ENCODE measurements at regions of chr19 and their contacts with region 1.

Region 1: DNA sequence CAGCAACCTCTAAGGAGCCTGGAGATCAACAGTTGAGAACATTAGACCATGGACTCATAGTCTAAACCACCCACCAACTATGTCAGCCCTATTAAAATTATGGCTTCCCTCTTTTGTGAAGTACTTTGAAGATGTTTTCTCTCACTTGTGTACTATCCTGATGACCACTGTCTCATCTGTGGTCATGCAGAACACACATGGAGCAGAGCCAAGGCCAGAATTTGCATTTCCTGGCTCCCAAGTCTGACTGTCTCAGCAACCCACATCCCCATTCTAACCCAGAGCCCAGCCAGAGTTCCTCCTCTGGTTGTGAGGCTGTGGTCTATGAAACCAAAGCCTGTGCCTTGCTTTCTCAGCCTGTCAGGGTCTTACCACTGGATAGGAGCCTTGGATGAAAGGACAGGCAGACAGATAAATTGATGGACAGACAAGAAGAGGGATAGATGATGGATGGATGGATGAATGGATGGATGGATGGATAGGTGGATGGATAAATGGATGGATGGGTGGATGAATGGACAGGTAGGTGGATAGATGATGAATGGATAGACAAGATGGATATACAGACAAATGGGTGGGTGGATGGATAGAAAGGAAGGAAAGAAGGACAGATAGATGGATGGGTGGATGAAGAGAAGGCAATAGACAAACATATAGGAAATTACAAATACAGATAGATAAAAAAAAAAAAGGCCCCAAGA is 35.4 kb downstream of the ZNF557 start:
- DNase-seq: no peak
- H3K4me3 ChIP-seq: no peak overlapping the region
- H3K4me1 ChIP-seq: peaks cover under 1% of the 10 kb centered on the region; the same call in 1 of the 2 replicates
- H3K27me3 ChIP-seq: no peaks in the 10 kb centered on the region

Region 2: DNA sequence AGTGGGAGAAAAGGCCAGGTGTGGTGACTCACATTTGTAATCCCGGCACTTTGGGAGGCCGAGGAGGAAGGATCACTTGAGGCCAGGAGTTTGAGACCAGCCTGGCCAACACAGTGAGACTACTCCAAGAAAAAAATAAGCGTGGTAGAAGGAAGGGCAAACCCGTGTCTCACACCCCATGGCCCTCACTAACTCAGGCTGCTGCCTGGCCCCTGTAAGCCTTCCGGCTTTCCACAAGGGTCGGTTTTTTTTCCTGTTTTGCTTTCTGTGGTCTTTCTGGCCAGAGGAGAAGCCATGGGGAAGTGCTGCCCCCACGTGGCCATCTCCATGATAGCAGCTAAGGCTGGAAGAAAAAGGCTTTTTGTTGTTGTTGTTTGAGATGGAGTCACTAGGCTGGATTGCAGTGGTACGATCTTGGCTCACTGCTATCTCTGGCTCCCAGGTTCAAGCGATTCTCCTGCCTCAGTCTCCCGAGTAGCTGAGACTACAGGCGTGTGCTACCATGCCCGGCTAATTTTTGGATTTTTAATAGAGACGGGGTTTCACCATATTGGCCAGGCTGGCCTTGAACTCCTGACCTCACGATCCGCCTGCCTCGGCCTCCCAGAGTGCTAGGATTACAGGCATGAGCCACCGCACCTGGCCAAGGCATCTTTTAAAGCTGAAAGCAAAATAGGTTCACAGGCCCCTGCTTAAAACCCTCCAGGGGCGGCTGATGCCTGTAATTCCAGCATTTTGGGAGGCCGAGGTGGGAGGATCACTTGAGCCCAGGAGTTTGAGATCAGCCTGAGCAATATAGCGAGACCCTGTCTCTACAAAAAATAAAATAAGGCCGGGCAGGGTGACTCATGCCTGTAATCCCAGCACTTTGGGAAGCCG is 236.3 kb after region 1 on chr19:
- in situ Hi-C with region 1: loop called (anchors 5 kb)
- DNase-seq: peak; percentile 78 to 92
- H3K4me3 ChIP-seq: no peak overlapping the region; the same call in 1 of the 2 replicates
- H3K4me1 ChIP-seq: no peaks in the 10 kb centered on the region
- H3K27me3 ChIP-seq: peaks cover 7% of the 10 kb centered on the region; the same call in 1 of the 2 replicates

Measured in HAP-1 (cell line).